ENCODE measurements at regions of chr16 and their contacts with region 1.

Region 1: DNA sequence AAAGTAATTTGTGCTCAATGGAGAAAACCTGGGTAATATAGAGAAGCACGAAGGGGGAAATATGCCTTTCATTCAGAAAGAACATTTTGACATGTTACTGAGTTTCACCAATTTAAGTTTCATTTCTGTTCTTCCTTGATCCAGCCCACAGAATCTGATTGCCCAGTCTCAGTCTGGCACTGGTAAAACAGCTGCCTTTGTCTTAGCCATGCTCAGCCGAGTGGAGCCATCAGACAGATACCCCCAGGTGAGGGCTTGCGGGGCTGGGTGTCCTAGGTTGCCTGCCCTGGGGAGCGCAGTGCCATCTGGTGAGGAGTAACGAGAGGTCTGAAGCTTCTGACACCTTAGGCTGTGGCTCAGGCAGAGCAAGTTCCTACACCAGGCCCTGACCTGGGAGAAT is 17.7 kb downstream of the DDX19A start:
- DNase-seq: no peak
- H3K4me3 ChIP-seq: no peak overlapping the region
- CTCF ChIP-seq: no peak

Region 2: DNA sequence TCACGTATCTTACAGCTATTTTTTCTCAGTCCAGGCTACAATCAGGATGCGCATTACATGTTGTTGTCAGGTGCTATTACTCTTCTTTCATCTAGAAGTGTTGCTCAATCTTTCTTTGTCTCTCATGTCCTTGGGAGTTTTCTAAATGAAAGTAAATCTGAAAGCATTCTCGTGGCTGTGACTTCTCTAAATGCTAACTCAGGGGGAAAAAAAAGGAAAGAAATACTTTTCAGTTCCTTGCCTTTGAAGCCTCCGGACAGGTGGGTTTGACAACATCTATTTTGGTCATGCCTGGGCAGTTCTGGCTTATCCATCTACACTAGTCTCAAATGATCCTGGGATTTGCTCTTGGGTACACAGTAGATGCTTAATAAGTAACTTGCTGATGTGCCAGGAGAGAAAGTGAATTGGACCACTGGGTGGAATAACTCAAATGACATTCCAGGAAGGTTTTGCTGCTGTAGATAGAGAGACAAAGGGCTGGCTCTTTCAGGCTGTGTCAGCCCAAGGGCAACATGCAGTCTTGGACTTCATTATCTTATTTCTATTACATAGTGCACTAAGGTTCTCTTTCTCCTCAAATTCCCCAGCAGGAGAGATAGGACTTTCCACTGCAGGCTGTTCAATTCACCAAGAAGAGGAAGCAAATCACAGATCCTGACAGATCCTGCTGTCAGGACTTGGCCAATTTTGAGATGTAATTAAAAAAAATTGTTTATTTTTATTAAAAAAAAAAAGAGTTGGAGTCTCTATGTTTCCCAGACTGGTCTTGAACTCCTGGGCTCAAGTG is 862.2 kb before region 1 on chr16:
- in situ Hi-C with region 1: no loop called
- DNase-seq: no peak
- H3K4me3 ChIP-seq: no peak overlapping the region
- CTCF ChIP-seq: no peak

Region 3: DNA sequence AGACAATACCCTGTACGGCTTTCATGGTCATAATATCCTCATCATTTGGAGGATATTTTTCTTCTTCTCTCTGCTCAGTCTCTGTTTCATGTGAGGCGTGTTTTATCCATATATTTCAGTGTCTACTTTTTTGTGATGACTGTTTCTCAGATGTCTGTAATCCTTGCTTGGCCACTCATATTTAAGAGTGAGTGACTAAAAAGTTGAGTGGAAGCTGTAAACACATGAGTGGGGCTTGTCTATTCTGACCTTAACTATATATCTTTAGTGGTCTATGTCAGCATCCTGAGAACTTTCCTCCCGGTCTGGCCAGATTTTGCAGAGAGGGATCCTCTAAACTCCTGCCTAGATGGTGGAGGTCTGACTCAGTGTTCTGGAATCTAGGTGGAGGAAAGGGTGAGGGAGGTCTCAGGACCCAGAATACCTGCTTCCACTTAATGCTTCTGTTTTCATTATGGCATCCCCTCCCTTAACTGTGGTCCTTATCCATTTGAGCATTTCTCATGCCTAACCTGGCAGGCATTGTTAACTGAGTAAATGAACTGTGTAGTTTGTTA is 59.4 kb before region 1 on chr16:
- in situ Hi-C with region 1: loop called (anchors 10 kb)
- DNase-seq: no peak
- H3K4me3 ChIP-seq: no peak overlapping the region
- CTCF ChIP-seq: no peak

Region 4: DNA sequence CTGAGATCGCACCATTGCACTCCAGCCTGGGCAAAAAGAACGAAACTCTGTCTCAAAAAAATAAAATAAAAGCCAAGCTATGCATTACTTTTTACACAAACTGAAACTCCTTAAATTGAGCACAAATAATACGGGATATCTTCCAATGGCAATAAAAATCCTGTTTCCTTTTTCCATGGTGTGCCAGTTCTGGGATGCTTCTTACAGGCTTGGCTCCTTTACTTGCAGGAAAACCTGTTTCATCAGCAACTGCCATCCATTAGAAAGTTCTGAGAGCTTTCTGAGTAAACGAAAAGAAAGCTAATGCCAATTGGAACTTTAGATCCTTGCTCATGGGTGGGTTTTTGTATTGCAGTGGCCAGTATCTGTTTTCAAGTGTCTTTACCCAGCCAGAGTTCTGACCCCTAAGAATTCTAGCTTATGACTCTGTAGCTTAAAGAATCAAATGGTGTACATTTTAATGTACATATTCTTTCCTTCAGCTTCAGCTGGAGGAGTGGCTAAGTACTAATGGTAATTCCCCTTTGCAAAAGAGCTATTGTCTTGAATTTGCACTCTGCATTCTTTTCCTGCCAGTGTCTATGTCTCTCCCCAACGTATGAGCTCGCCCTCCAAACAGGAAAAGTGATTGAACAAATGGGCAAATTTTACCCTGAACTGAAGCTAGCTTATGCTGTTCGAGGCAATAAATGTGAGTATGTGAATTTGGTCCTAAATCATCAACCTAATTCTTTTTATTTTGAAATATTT is 39.2 kb before region 1 on chr16:
- in situ Hi-C with region 1: no loop called
- DNase-seq: no peak
- H3K4me3 ChIP-seq: no peak overlapping the region
- CTCF ChIP-seq: no peak

Region 5: GRCh38 chr16:70460737-70461261 is 96.4 kb after region 1 on chr16:
- in situ Hi-C with region 1: no loop called
- DNase-seq: no peak
- H3K4me3 ChIP-seq: no peak overlapping the region
- CTCF ChIP-seq: no peak

Region 6: DNA sequence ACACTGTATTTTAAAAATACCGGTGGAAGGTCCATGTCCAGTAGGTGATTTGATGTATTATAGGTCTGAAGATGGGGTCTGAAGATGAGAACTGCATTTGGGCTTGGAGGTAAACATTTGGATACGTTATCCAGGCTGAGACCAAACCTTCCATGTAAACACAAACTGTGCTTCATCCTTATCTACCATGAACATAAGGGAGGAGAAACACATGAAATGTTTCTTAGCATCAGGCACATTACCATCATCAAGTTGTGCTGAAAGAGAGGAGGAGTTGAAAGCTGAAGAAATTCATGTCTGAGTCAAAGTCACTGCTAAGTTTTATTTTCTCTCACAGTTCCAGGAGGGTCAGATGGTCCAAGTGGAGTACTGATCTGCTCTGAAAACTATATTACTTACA is 170.6 kb after region 1 on chr16:
- in situ Hi-C with region 1: loop called (anchors 10 kb)
- DNase-seq: no peak
- H3K4me3 ChIP-seq: no peak overlapping the region
- CTCF ChIP-seq: no peak